ENCODE measurements at regions of chr1 and their contacts with region 1.

Region 1: GRCh38 chr1:203686091-203686632 is 59.5 kb downstream of the ATP2B4 start:
- DNase-seq: no peak
- H3K4me3 Mint-ChIP-seq: no peak overlapping the region
- H3K27ac Mint-ChIP-seq: no peak overlapping the region
- H3K4me1 Mint-ChIP-seq: no peaks in the 10 kb centered on the region
- H3K27me3 Mint-ChIP-seq: peaks cover 23% of the 10 kb centered on the region
- CTCF ChIP-seq: no peak

Region 2: DNA sequence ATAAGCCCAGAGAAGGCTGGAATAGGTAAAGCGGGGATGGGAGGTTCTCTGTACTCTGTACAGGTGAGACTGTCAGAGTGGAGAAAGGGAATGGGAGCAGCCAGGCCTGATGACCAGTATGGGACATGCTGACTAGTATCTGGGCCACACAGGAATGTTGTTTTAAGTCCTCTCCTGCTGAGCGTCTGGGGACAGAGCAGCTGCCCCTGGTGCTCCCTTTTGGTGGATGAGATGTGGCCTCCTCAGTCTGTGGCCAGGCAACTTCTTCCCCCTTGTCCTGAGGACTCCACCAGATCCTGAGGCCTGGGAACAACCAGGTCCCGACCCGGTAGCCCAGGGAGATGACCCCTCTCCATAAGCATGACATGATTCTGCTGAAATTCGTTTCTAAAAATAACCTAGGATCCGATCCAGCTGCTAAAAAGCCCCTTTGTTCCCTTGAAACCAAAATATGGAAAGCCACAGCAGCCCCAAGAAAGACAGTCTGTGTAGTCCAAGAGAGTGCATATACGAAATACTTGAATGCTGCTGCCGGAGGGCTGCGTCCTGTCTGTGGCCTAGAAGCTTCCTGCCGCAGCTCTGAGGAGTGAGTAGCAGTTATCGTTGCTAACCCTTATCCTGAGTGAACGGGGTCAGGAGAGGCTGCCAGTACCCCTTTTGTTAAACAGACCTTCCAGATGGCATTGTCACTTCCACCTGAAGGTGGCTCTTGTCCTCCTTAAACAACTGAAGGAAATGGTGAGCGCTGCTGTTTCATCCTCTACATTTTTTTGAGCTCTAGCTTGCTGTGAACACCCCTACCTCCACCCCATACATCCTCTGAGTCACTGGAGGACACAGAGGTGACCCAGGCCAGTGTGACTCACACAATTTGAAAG is 12.4 kb before region 1 on chr1:
- CTCF ChIA-PET with region 1: interaction called, 12 read pairs
- intact Hi-C with region 1: no loop called
- DNase-seq: peak; percentile 80
- H3K4me3 Mint-ChIP-seq: no peak overlapping the region
- H3K27ac Mint-ChIP-seq: no peak overlapping the region
- H3K4me1 Mint-ChIP-seq: peaks cover 27% of the 10 kb centered on the region
- H3K27me3 Mint-ChIP-seq: peaks cover 6% of the 10 kb centered on the region
- CTCF ChIP-seq: peak; percentile 41

Region 3: GRCh38 chr1:203769505-203770343 is 83.6 kb after region 1 on chr1:
- CTCF ChIA-PET with region 1: no interaction called
- intact Hi-C with region 1: no loop called
- DNase-seq: peak; percentile 70
- H3K4me3 Mint-ChIP-seq: peak overlapping the region; percentile 43
- H3K27ac Mint-ChIP-seq: peak overlapping the region; percentile 22
- H3K4me1 Mint-ChIP-seq: peaks cover 23% of the 10 kb centered on the region
- H3K27me3 Mint-ChIP-seq: peaks cover 31% of the 10 kb centered on the region
- CTCF ChIP-seq: no peak